ENCODE measurements at regions of chr12 and their contacts with region 1.

Region 1: DNA sequence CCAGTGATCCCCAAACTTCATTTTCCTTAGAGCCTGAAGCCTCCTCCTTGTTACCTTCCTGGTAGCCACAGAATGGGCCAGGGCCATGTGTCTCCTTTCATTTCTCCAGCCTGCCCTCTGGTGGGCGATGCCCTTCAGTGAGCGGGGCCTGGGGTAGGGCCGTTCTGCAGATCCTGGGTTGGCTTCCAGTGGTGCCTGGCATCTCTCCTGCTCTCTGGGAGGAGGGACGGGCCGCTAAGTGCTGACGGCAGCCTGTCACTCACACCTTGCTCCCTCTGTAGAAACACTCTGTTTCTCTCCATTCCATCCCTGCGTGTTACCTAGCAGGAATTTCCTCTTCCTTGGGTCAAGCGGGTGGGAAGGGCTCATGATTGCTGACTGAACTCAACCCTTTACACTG is 232.1 kb downstream of the CACNA1C start:
- DNase-seq: peak; percentile 82 to 93 (median 93)
- ATAC-seq: peak; percentile 77 to 81
- H3K4me3 ChIP-seq: no peak overlapping the region
- H3K27ac ChIP-seq: peak overlapping the region; percentile 62
- H3K4me1 ChIP-seq: peaks cover 34% of the 10 kb centered on the region
- H3K27me3 ChIP-seq: no peaks in the 10 kb centered on the region

Region 2: GRCh38 chr12:2057041-2057794 is 227.6 kb before region 1 on chr12:
- intact Hi-C with region 1: loop called (anchors 10 kb)
- DNase-seq: peak; percentile 65 to 87 (median 82)
- ATAC-seq: peak in 1 of 2 donors; percentile 11
- H3K4me3 ChIP-seq: no peak overlapping the region
- H3K27ac ChIP-seq: no peak overlapping the region
- H3K4me1 ChIP-seq: no peaks in the 10 kb centered on the region
- H3K27me3 ChIP-seq: no peaks in the 10 kb centered on the region